Right cardiac atrium (tissue), 5 donors: ENCODE measurements at regions of chr1 and their contacts with region 1.

Region 1: GRCh38 chr1:200971955-200972711 is 51.4 kb downstream of the KIF21B start:
- DNase-seq: peak; percentile 70 to 90 (median 88)
- ATAC-seq: peak; percentile 35 to 45
- H3K4me3 ChIP-seq: no peak overlapping the region
- H3K27ac ChIP-seq: no peak overlapping the region
- H3K4me1 ChIP-seq: no peaks in the 10 kb centered on the region
- H3K27me3 ChIP-seq: no peaks in the 10 kb centered on the region

Region 2: GRCh38 chr1:201042779-201043461 is 70.8 kb after region 1 on chr1:
- intact Hi-C with region 1: loop called (anchors 2 kb)
- DNase-seq: peak; percentile 56 to 86 (median 77)
- ATAC-seq: peak; percentile 79 to 86
- H3K4me3 ChIP-seq: no peak overlapping the region
- H3K27ac ChIP-seq: no peak overlapping the region
- H3K4me1 ChIP-seq: no peaks in the 10 kb centered on the region
- H3K27me3 ChIP-seq: no peaks in the 10 kb centered on the region

Region 3: GRCh38 chr1:201108614-201109013 is 136.5 kb after region 1 on chr1:
- intact Hi-C with region 1: loop called in 3 of 4 experiments (anchors 5 to 10 kb)
- DNase-seq: no peak
- ATAC-seq: no peak
- H3K4me3 ChIP-seq: no peak overlapping the region
- H3K27ac ChIP-seq: no peak overlapping the region
- H3K4me1 ChIP-seq: no peaks in the 10 kb centered on the region
- H3K27me3 ChIP-seq: no peaks in the 10 kb centered on the region

Region 4: DNA sequence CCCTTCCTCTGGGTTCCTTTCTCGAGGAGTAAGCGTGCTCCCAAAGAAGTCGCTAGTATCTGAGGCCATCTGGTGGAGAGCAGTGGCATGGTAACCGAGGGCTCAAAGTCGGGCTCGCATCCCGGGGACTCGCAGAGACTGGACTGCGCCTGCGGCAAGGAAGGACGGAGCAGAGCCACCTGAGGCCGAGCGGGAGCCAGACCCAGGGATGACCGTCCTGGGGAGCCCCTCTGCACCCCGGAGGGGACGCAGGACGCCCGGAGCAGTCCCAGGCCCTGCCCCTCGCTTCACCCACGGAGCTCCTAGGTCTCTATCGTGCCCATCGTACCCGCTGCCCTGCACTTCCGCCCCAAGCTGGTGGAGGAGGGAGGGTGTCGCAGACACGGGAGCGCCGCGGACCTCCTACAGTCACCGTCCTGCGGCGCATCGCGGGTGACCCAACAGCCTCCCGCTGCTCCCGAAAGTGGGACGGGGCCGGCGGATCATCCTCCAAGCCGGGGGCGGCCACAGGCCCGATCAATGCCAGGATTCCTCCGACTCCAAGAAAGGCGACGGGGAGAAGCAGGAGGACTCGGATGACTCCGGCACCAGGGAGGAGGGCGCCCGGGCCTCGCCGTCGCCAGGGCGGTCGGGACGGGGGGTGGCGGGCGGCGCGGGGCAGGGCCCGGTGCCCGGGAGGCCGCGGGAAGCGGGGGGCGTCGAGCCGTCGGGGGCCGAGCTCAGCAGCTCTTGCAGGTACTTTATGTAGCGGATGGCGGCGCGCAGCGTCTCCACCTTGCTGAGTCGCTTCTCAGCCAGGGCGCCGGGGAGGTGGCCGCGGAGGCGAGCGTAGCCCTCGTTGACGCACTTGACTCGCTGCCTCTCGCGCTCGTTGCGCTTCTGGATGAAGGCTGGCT is 142.4 kb after region 1 on chr1:
- intact Hi-C with region 1: loop called (anchors 5 to 10 kb)
- DNase-seq: peak; percentile 88 to 94 (median 91)
- ATAC-seq: peak; percentile 95 to 96
- H3K4me3 ChIP-seq: peak overlapping the region; percentile 32
- H3K27ac ChIP-seq: no peak overlapping the region
- H3K4me1 ChIP-seq: no peaks in the 10 kb centered on the region
- H3K27me3 ChIP-seq: no peaks in the 10 kb centered on the region

Region 5: GRCh38 chr1:201229771-201230635 is 257.9 kb after region 1 on chr1:
- intact Hi-C with region 1: loop called in 2 of 4 experiments (anchors 10 kb)
- DNase-seq: no peak
- ATAC-seq: peak in 1 of 2 donors; percentile 22
- H3K4me3 ChIP-seq: no peak overlapping the region
- H3K27ac ChIP-seq: no peak overlapping the region
- H3K4me1 ChIP-seq: no peaks in the 10 kb centered on the region
- H3K27me3 ChIP-seq: no peaks in the 10 kb centered on the region